Panc1 (cell line): ENCODE measurements at regions of chr10 and their contacts with region 1.

Region 1: DNA sequence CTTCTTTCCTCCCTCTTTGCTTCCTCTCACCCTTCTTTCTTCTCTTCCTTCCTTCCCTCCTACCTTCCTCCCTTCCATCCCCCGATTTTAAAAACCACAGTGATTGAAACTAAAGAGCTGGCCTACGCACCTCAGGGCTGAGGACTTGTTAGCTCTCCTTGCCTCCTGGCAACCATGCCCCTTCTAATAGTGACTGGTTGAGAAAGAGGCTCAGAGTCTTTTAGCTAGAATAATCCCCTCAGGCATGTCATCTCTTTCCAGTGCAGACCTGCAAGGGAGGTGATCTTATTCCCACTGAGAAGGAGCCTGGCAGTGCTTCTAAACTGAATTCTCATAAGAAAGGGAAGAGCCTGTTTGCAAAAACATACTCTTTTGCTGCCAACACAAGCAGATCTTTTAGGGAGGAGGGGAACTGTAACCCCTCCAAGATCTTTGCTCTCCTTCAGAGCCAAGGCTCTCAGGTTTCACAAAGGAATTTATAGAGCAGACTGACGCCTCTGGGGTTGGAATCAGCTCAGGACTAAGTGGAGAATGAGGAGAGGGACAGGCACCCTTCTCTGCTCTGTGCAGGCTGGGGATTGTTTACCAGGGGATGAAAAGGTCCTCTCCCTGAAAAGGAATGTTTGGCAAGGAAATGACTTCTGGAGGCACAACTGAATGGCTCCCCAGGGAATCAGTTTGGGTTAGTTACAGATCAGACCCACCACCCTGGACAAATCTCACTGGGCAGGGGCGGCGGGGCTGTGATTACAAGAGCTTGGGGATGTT is 9.4 kb upstream of the ANKRD1 start:
- DNase-seq: no peak
- ATAC-seq: peak; percentile 51; the same call in 1 of the 2 replicates
- H3K4me3 ChIP-seq: no peak overlapping the region
- H3K27ac ChIP-seq: no peak overlapping the region
- H3K4me1 ChIP-seq: no peaks in the 10 kb centered on the region
- H3K27me3 ChIP-seq: peaks cover 3% of the 10 kb centered on the region
- CTCF ChIP-seq: no peak

Region 2: DNA sequence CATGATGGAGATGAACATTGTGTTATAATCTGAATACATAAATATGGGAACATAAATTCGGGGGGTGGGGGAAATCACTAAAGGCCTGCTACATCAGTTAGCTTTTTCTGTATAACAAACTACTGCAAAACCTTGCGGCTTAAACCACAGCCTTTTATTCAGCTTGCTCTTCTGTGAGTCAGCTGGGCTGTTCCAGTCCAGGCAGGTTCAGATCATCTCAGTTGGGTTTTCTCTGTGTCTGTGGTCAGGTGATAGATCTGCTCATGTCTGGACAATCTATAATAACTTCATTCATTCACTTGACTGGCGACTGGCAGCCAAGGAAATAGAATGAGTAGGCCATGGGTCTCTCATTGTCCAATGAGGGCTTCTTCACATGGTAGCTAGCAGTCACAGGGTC is 95.9 kb before region 1 on chr10:
- CTCF ChIA-PET with region 1: no interaction called
- POLR2A ChIA-PET with region 1: no interaction called
- in situ Hi-C with region 1: no loop called
- intact Hi-C with region 1: no loop called
- DNase-seq: no peak
- ATAC-seq: no peak
- H3K4me3 ChIP-seq: no peak overlapping the region
- H3K27ac ChIP-seq: no peak overlapping the region
- H3K4me1 ChIP-seq: no peaks in the 10 kb centered on the region
- H3K27me3 ChIP-seq: no peaks in the 10 kb centered on the region
- CTCF ChIP-seq: no peak

Region 3: DNA sequence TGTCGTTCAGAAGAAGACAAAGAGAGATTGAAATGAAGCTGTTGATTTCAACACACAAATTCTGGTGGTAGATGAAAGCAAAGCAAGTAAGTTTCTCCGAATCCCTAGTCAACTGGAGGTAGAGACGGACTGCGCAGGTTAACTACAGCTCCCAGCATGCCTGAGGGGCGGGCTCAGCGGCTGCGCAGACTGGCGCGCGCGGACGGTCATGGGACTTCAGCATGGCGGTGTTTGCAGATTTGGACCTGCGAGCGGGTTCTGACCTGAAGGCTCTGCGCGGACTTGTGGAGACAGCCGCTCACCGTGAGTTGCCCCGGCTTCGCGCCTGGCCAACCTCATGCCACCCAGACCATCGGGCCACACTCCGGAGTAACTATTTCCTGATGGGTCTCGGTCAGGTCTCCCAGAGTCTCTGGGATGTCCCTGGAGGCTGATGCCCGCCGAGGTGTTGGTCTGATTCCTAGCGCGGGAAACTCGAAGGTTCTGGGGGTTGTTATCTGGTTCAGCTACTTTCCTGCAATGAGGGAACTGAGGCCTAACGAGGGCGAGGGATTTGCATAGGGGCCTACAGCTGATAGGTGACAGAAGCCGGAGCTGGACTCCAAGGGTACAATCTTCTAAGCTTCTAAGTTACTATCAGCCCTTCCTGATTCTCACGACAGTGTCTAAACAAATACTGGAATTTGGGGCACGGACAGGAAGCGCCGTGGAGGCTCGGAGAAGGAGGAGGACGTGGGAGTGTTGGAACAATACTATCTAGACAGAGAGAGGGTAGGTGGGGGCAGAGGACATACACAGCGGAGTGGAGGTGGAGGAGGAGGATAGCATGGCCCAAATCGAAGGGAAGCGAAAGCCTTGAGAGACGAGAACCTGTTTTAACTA is 58.2 kb before region 1 on chr10 and contains the start of gene RPP30:
- CTCF ChIA-PET with region 1: no interaction called
- POLR2A ChIA-PET with region 1: no interaction called
- in situ Hi-C with region 1: no loop called
- intact Hi-C with region 1: no loop called
- DNase-seq: peak; percentile 73
- ATAC-seq: peak; percentile 100
- H3K4me3 ChIP-seq: peak within 1 kb of the TSS; percentile 90 to 99
- H3K27ac ChIP-seq: peak within 1 kb of the TSS; percentile 93
- H3K4me1 ChIP-seq: peaks cover 10% of the 10 kb centered on the region; the same call in 1 of the 2 replicates
- H3K27me3 ChIP-seq: peaks cover 2% of the 10 kb centered on the region; the same call in 1 of the 2 replicates
- CTCF ChIP-seq: no peak
- total RNA-seq, gene RPP30: 59.0 TPM

Region 4: GRCh38 chr10:91590904-91591796 is 660.9 kb after region 1 on chr10:
- CTCF ChIA-PET with region 1: no interaction called
- POLR2A ChIA-PET with region 1: interaction called, 13 read pairs
- in situ Hi-C with region 1: no loop called
- intact Hi-C with region 1: no loop called
- DNase-seq: no peak
- ATAC-seq: peak; percentile 84
- H3K4me3 ChIP-seq: no peak overlapping the region
- H3K27ac ChIP-seq: no peak overlapping the region; the same call in 1 of the 2 replicates
- H3K4me1 ChIP-seq: peaks cover 7% of the 10 kb centered on the region; the same call in 1 of the 2 replicates
- H3K27me3 ChIP-seq: no peaks in the 10 kb centered on the region
- CTCF ChIP-seq: no peak